CD4-positive, alpha-beta T cell (primary cell): ENCODE measurements at regions of chr11 and their contacts with region 1.

Region 1: DNA sequence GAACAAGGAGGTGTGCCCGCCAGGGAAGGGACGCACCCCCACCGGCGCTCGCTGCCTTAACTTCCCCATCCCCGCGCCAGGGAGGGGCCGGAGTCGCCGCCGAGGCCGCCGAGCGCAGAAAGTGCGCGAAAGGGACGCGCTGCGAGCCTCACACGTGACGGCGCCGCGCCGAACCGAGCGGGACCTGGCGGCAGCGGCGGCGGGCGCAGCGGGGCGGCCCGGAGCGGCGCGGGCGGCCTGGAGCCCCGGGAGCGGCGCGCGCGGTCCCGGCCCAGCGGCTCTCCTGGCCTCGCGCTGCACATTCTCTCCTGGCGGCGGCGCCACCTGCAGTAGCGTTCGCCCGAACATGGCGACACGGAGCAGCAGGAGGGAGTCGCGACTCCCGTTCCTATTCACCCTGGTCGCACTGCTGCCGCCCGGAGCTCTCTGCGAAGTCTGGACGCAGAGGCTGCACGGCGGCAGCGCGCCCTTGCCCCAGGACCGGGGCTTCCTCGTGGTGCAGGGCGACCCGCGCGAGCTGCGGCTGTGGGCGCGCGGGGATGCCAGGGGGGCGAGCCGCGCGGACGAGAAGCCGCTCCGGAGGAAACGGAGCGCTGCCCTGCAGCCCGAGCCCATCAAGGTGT is at the start of gene SORL1:
- DNase-seq: peak; percentile 64 to 89 (median 76)
- ATAC-seq: peak; percentile 57
- H3K4me3 ChIP-seq: peak within 1 kb of the TSS; percentile 90
- H3K4me3 Mint-ChIP-seq: peak within 1 kb of the TSS; percentile 95
- H3K27ac ChIP-seq: peak within 1 kb of the TSS; percentile 68 to 88
- H3K27ac Mint-ChIP-seq: peak within 1 kb of the TSS; percentile 93
- H3K4me1 ChIP-seq: peaks cover 81% of the 10 kb centered on the region
- H3K4me1 Mint-ChIP-seq: peaks cover 87% of the 10 kb centered on the region
- H3K27me3 ChIP-seq: no peaks in the 10 kb centered on the region
- H3K27me3 Mint-ChIP-seq: no peaks in the 10 kb centered on the region
- CTCF ChIP-seq: peak; percentile 53
- total RNA-seq, gene SORL1: 235 to 241 TPM

Region 2: DNA sequence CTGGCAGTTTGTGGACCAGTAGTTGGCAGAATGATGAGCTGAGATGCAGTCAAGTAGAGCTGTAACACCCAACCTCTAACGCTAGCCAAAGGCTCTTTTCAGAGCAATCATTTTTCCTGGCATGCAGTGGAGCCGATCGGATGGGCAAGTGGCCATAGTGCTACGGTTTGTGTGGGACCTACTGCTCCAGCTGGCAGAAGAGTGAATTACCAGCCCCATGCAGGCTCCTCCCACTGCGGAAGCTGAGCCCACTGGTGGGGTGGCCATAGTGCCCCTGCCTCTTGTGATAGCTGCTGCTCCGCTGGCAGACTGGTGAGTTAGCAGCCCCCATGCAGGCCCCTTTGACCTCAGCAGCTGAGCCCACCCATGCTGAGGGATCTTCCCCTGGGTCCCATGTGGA is 186.5 kb before region 1 on chr11:
- CTCF ChIA-PET with region 1: no interaction called
- POLR2A ChIA-PET with region 1: no interaction called
- intact Hi-C with region 1: no loop called
- DNase-seq: no peak
- ATAC-seq: no peak
- H3K4me3 ChIP-seq: no peak overlapping the region
- H3K4me3 Mint-ChIP-seq: no peak overlapping the region
- H3K27ac ChIP-seq: no peak overlapping the region
- H3K27ac Mint-ChIP-seq: no peak overlapping the region
- H3K4me1 ChIP-seq: no peaks in the 10 kb centered on the region
- H3K4me1 Mint-ChIP-seq: peaks cover 5% of the 10 kb centered on the region
- H3K27me3 ChIP-seq: peaks cover 29 to 40% of the 10 kb centered on the region in 2 experiments
- H3K27me3 Mint-ChIP-seq: peaks cover 45% of the 10 kb centered on the region
- CTCF ChIP-seq: no peak

Region 3: GRCh38 chr11:121292495-121293287 is 159.4 kb before region 1 on chr11 and contains the start of gene SC5D:
- CTCF ChIA-PET with region 1: no interaction called
- POLR2A ChIA-PET with region 1: interaction called, 52 read pairs
- intact Hi-C with region 1: no loop called
- DNase-seq: peak; percentile 88 to 98 (median 94)
- ATAC-seq: peak; percentile 82
- H3K4me3 ChIP-seq: peak within 1 kb of the TSS; percentile 84
- H3K4me3 Mint-ChIP-seq: peak within 1 kb of the TSS; percentile 92
- H3K27ac ChIP-seq: peak within 1 kb of the TSS; percentile 93 to 96
- H3K27ac Mint-ChIP-seq: peak within 1 kb of the TSS; percentile 99
- H3K4me1 ChIP-seq: peaks cover 12% of the 10 kb centered on the region
- H3K4me1 Mint-ChIP-seq: peaks cover 67% of the 10 kb centered on the region
- H3K27me3 ChIP-seq: no peaks in the 10 kb centered on the region
- H3K27me3 Mint-ChIP-seq: no peaks in the 10 kb centered on the region
- CTCF ChIP-seq: no peak
- total RNA-seq, gene SC5D: 87.7 to 92.7 TPM

Region 4: DNA sequence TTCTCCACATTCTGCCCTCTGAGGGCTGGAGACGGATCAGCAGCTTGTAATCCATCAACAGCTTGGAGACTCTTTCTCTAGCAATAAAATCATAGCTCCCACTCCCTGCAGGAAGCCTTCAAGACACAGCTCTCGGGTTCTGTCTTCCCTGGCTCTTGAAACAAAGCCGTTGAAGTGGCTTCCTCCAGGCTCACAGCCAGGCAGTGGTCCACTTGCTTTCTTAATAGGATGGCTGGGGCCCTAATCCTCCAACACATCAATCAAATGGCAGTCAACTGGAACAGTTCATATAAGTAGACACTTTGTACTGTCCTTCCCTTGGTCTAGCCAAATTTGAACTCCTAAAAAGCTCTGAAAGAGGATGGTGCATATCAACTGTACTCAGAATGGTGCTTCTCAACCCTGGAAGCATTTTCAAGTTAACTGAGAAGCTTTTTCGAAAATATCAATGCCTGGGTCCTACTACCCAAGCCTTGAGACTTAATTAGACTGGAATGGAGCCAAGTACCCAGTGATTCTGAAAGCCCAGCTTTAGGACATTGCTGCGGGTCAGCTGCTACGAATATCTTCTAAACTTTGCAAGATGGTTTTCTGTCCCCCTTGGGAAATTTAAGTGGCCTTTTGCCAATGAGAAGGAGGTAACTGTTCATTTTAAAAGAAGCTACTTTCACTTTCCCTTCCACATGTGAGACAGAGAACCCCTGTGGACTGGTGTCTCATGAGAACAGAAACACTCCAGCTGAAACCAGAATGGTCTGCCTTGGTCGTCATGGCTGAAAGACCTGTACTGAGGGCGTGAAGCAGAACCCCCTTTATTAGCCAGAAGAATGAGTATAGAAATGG is 84.9 kb before region 1 on chr11:
- CTCF ChIA-PET with region 1: no interaction called
- POLR2A ChIA-PET with region 1: interaction called, 53 read pairs
- intact Hi-C with region 1: loop called in 1 of 2 experiments (anchors 5 kb)
- DNase-seq: peak in 11 of 14 experiments; percentile 11 to 82 (median 25)
- ATAC-seq: peak; percentile 88
- H3K4me3 ChIP-seq: peak overlapping the region; percentile 17
- H3K4me3 Mint-ChIP-seq: peak overlapping the region; percentile 84
- H3K27ac ChIP-seq: peak overlapping the region; percentile 4 to 31
- H3K27ac Mint-ChIP-seq: peak overlapping the region; percentile 81
- H3K4me1 ChIP-seq: peaks cover 23% of the 10 kb centered on the region
- H3K4me1 Mint-ChIP-seq: peaks cover 45% of the 10 kb centered on the region
- H3K27me3 ChIP-seq: no peaks in the 10 kb centered on the region
- H3K27me3 Mint-ChIP-seq: no peaks in the 10 kb centered on the region
- CTCF ChIP-seq: no peak

Region 5: DNA sequence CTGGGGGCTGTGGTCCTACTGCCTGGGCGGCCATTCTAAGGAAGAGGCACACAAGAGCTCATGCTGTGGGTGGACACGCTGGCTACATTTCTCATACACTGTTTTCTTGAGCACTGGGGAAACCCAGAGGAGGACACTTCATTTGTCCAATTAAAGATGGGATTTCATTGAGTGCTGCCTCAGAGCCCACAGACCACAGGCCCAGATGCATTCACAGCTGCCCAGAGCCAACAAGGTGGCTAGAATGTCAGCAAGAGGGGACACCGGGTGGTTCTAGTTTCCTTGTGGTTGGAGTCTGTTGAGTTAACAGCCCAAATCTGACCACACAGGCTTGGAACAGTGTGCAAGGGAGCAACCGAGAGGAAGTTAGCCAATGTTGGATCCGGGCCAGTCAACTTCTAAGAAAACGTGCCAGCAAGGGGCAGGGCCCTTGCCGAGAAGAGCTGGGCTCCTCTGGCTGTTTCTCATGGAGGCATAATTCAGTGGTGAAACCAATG is 35.0 kb before region 1 on chr11:
- CTCF ChIA-PET with region 1: no interaction called
- POLR2A ChIA-PET with region 1: interaction called, 128 read pairs
- intact Hi-C with region 1: loop called in 1 of 2 experiments (anchors 2 kb)
- DNase-seq: peak; percentile 1 to 80 (median 40)
- ATAC-seq: peak; percentile 25
- H3K4me3 ChIP-seq: no peak overlapping the region
- H3K4me3 Mint-ChIP-seq: peak overlapping the region; percentile 9
- H3K27ac ChIP-seq: peak overlapping the region; percentile 47 to 81
- H3K27ac Mint-ChIP-seq: peak overlapping the region; percentile 96
- H3K4me1 ChIP-seq: peaks cover 59% of the 10 kb centered on the region
- H3K4me1 Mint-ChIP-seq: peaks cover 75% of the 10 kb centered on the region
- H3K27me3 ChIP-seq: no peaks in the 10 kb centered on the region
- H3K27me3 Mint-ChIP-seq: no peaks in the 10 kb centered on the region
- CTCF ChIP-seq: no peak

Region 6: GRCh38 chr11:121437018-121437685 is 14.9 kb before region 1 on chr11:
- CTCF ChIA-PET with region 1: no interaction called
- POLR2A ChIA-PET with region 1: interaction called, 46 read pairs
- intact Hi-C with region 1: no loop called
- DNase-seq: no peak
- ATAC-seq: no peak
- H3K4me3 ChIP-seq: no peak overlapping the region
- H3K4me3 Mint-ChIP-seq: no peak overlapping the region
- H3K27ac ChIP-seq: no peak overlapping the region
- H3K27ac Mint-ChIP-seq: no peak overlapping the region
- H3K4me1 ChIP-seq: peaks cover 13% of the 10 kb centered on the region
- H3K4me1 Mint-ChIP-seq: peaks cover 55% of the 10 kb centered on the region
- H3K27me3 ChIP-seq: no peaks in the 10 kb centered on the region
- H3K27me3 Mint-ChIP-seq: no peaks in the 10 kb centered on the region
- CTCF ChIP-seq: no peak

Region 7: DNA sequence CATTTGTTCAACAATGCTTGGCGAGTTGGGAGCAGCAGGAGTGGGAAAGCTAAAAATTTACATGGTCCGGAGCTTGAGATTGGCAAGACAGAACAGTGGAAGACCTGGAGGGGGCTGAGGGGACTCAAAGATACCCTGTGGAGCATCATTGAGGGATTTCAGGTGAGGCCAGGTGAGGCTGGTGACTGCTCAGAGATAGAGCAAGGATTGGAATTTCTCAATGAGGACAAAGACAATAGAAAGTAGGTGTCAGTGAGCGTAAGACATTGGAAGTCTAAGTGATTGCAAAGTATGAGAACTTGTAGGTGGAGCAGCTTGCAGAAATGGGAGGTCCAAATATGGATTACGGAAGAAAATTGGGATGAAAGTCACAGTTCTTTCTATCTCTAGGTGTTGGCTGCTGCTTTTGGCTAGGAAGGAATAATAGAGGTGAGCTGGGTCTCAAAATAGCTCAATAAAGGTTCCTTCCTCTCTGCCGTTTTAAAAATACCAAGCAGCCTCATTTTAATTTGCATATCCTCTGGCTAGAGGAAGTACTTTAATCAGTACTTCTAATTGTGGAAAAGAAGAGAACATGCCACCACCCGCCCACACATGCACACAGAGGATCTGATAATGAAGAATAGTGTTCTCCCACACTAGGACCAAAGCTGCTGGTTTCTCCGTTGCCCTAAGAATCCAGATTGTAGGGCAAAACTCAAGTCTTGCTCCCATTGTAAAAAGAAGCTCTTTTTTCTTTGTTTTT is 42.4 kb after region 1 on chr11:
- CTCF ChIA-PET with region 1: interaction called, 4 read pairs
- POLR2A ChIA-PET with region 1: interaction called, 20 read pairs
- intact Hi-C with region 1: loop called in 1 of 2 experiments (anchors 5 kb)
- DNase-seq: peak in 4 of 14 experiments; percentile 24 to 52 (median 37)
- ATAC-seq: peak; percentile 77
- H3K4me3 ChIP-seq: no peak overlapping the region
- H3K4me3 Mint-ChIP-seq: peak overlapping the region; percentile 4
- H3K27ac ChIP-seq: peak overlapping the region in 1 of 2 donors; percentile 15
- H3K27ac Mint-ChIP-seq: peak overlapping the region; percentile 76
- H3K4me1 ChIP-seq: peaks cover 16% of the 10 kb centered on the region
- H3K4me1 Mint-ChIP-seq: peaks cover 68% of the 10 kb centered on the region
- H3K27me3 ChIP-seq: no peaks in the 10 kb centered on the region
- H3K27me3 Mint-ChIP-seq: no peaks in the 10 kb centered on the region
- CTCF ChIP-seq: no peak

Region 8: GRCh38 chr11:122717264-122717867 is 1265.3 kb after region 1 on chr11:
- CTCF ChIA-PET with region 1: no interaction called
- POLR2A ChIA-PET with region 1: no interaction called
- intact Hi-C with region 1: no loop called
- DNase-seq: peak in 4 of 14 experiments; percentile 29 to 71 (median 40)
- ATAC-seq: no peak
- H3K4me3 ChIP-seq: no peak overlapping the region
- H3K4me3 Mint-ChIP-seq: no peak overlapping the region
- H3K27ac ChIP-seq: peak overlapping the region in 1 of 2 donors; percentile 3
- H3K27ac Mint-ChIP-seq: peak overlapping the region; percentile 42
- H3K4me1 ChIP-seq: peaks cover 51% of the 10 kb centered on the region
- H3K4me1 Mint-ChIP-seq: peaks cover 66% of the 10 kb centered on the region
- H3K27me3 ChIP-seq: no peaks in the 10 kb centered on the region
- H3K27me3 Mint-ChIP-seq: no peaks in the 10 kb centered on the region
- CTCF ChIP-seq: no peak